ENCODE measurements at regions of chr5 and their contacts with region 1.

Region 1: DNA sequence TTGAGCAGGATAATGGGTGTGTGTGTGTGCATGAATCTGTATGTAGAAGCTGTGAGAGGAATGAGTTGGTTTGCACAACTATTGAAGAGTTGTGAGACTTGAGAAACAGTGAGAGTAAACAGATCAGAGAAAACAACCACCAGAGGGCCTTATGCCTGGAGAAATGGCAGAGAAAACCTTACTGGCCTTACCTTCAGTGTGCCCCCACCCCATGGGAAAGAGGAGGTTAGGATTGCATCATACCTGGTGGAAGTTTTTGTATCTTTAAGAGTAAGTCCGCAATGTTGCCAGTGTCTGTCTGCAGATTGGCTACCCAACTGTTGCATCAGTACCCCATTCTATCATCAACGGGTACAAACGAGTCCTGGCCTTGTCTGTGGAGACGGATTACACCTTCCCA is 1909.4 kb upstream of the WWC1 start:
- DNase-seq: no peak
- H3K4me3 ChIP-seq: no peak overlapping the region
- H3K4me3 Mint-ChIP-seq: no peak overlapping the region
- H3K27ac ChIP-seq: no peak overlapping the region
- H3K27ac Mint-ChIP-seq: no peak overlapping the region
- H3K4me1 ChIP-seq: no peaks in the 10 kb centered on the region
- H3K4me1 Mint-ChIP-seq: no peaks in the 10 kb centered on the region
- H3K27me3 ChIP-seq: no peaks in the 10 kb centered on the region
- H3K27me3 Mint-ChIP-seq: no peaks in the 10 kb centered on the region

Region 2: GRCh38 chr5:164844348-164844747 is 1537.7 kb before region 1 on chr5:
- CTCF ChIA-PET with region 1: no interaction called
- POLR2A ChIA-PET with region 1: no interaction called
- intact Hi-C with region 1: loop called (anchors 5 kb)
- DNase-seq: no peak
- H3K4me3 ChIP-seq: no peak overlapping the region
- H3K4me3 Mint-ChIP-seq: no peak overlapping the region
- H3K27ac ChIP-seq: no peak overlapping the region
- H3K27ac Mint-ChIP-seq: no peak overlapping the region
- H3K4me1 ChIP-seq: no peaks in the 10 kb centered on the region
- H3K4me1 Mint-ChIP-seq: no peaks in the 10 kb centered on the region
- H3K27me3 ChIP-seq: no peaks in the 10 kb centered on the region
- H3K27me3 Mint-ChIP-seq: no peaks in the 10 kb centered on the region

Measured in CD4-positive, alpha-beta memory T cell (primary cell).